Thyroid gland (tissue), 4 donors: ENCODE measurements at regions of chr22 and their contacts with region 1.

Region 1: DNA sequence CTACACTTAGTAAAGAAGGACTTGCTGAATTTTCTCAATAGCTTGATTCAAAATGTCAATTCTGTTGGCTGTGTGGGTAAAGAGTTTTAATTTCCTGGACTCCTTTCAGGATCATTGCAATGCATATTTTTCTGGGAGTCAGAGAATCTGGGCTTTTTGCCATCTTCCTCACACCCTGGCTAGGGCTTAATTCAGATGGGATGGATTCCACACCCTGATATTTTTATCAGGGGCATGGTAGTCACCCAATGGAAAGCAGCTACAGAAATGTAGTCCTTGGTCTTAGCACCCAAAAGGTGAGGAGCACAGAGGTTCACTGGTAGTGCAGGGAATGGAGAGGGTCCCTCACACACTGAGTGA is 79.3 kb downstream of the SGSM3 start:
- DNase-seq: no peak
- H3K4me3 ChIP-seq: no peak overlapping the region
- H3K27ac ChIP-seq: peak overlapping the region in 2 of 3 donors; percentile 47 to 51
- H3K4me1 ChIP-seq: peaks cover 56 to 72% of the 10 kb centered on the region in 2 donors
- H3K27me3 ChIP-seq: no peaks in the 10 kb centered on the region
- CTCF ChIP-seq: no peak
- POLR2A ChIP-seq: no peak

Region 2: GRCh38 chr22:40235308-40235707 is 214.3 kb before region 1 on chr22:
- intact Hi-C with region 1: no loop called
- DNase-seq: no peak
- H3K4me3 ChIP-seq: no peak overlapping the region
- H3K27ac ChIP-seq: no peak overlapping the region
- H3K4me1 ChIP-seq: peaks cover 8 to 38% of the 10 kb centered on the region in 2 donors
- H3K27me3 ChIP-seq: no peaks in the 10 kb centered on the region
- CTCF ChIP-seq: no peak
- POLR2A ChIP-seq: no peak

Region 3: DNA sequence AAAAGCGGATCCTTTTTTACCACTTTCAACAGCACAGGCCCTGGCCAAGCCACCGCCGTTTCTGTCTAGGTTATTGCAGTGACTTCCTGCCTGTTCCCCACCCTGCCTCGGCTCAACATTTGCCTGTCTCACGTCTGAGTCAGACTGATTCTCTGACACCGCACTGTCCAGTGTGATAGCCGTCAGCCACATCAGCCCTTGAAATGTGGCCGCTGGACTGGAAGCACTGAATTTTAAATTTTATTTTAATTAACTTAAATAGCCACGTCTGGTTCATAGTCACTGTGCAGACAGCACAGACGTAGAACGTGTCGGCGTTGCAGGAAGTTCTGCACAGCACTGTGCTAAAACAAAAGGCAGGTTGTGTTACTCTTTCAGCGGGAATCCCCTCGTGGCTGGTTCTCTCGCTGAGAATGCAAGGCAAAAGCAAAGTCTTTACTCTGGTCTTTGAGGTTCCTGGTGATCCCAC is 159.6 kb before region 1 on chr22:
- intact Hi-C with region 1: no loop called
- DNase-seq: no peak
- H3K4me3 ChIP-seq: no peak overlapping the region
- H3K27ac ChIP-seq: no peak overlapping the region
- H3K4me1 ChIP-seq: peaks cover 0 to 7% of the 10 kb centered on the region in 2 donors
- H3K27me3 ChIP-seq: no peaks in the 10 kb centered on the region
- CTCF ChIP-seq: no peak
- POLR2A ChIP-seq: no peak

Region 4: GRCh38 chr22:40487663-40488249 is 38.1 kb after region 1 on chr22:
- intact Hi-C with region 1: loop called (anchors 5 kb)
- DNase-seq: no peak
- H3K4me3 ChIP-seq: no peak overlapping the region
- H3K27ac ChIP-seq: no peak overlapping the region
- H3K4me1 ChIP-seq: peaks cover 24 to 46% of the 10 kb centered on the region in 2 donors
- H3K27me3 ChIP-seq: no peaks in the 10 kb centered on the region
- CTCF ChIP-seq: peak in 5 of 6 experiments; percentile 36 to 67 (median 66)
- POLR2A ChIP-seq: no peak